Pancreas (tissue), 10 donors: ENCODE measurements at regions of chr7 and their contacts with region 1.

Region 1: GRCh38 chr7:24819916-24820689 is 62.8 kb upstream of the GSDME start:
- DNase-seq: peak; percentile 80 to 90 (median 84)
- ATAC-seq: peak; percentile 94 to 98 (median 97)
- H3K4me3 ChIP-seq: no peak overlapping the region
- H3K27ac ChIP-seq: peak overlapping the region in 2 of 4 donors; percentile 3 to 41
- H3K4me1 ChIP-seq: peaks cover 3 to 13% (median 9%) of the 10 kb centered on the region in 3 donors
- H3K27me3 ChIP-seq: no peaks in the 10 kb centered on the region
- CTCF ChIP-seq: peak; percentile 68 to 84 (median 77)

Region 2: GRCh38 chr7:25069900-25070443 is 249.9 kb after region 1 on chr7:
- intact Hi-C with region 1: loop called in 2 of 3 experiments (anchors 10 kb)
- DNase-seq: peak in 3 of 6 donors; percentile 41 to 55 (median 53)
- ATAC-seq: peak; percentile 82 to 96 (median 92)
- H3K4me3 ChIP-seq: peak overlapping the region in 3 of 4 donors; percentile 12 to 38 (median 30)
- H3K27ac ChIP-seq: no peak overlapping the region
- H3K4me1 ChIP-seq: peaks cover 0 to 11% (median 0%) of the 10 kb centered on the region in 3 donors
- H3K27me3 ChIP-seq: no peaks in the 10 kb centered on the region
- CTCF ChIP-seq: peak; percentile 77 to 89 (median 82)

Region 3: DNA sequence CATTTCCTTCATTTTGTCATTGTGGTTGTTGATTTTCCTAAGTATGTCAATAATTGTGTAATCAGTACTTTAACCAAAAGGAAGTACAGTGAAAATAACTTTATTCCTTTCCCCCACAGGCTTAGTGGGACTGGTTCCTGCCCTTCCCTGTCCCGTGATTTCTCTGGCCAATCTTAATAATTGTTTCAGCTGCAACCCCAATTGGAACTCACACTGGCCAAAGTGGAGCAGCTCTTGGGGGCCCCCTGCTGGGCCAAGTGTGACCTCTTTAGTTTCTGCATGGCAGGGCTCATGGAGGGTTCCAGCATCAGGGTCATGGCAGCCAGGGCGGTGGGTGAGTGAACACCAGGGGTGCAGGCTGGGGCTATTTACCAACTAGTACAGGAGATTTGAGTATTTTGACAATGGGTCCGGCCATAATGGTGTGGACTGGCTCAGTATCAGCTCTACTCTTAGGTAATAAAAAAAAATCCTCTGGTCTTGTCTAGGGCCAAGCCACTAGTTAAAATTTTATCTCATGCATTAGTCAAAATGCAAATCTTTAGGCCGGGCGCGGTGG is 273.2 kb after region 1 on chr7:
- intact Hi-C with region 1: loop called in 1 of 3 experiments (anchors 10 kb)
- DNase-seq: peak; percentile 40 to 79 (median 67)
- ATAC-seq: peak; percentile 82 to 92 (median 90)
- H3K4me3 ChIP-seq: no peak overlapping the region
- H3K27ac ChIP-seq: no peak overlapping the region
- H3K4me1 ChIP-seq: peaks cover 0 to 2% (median 0%) of the 10 kb centered on the region in 3 donors
- H3K27me3 ChIP-seq: no peaks in the 10 kb centered on the region
- CTCF ChIP-seq: peak; percentile 33 to 59 (median 48)

Region 4: GRCh38 chr7:25109276-25109675 is 289.2 kb after region 1 on chr7:
- intact Hi-C with region 1: loop called in 1 of 3 experiments (anchors 10 kb)
- DNase-seq: no peak
- ATAC-seq: no peak
- H3K4me3 ChIP-seq: no peak overlapping the region
- H3K27ac ChIP-seq: no peak overlapping the region
- H3K4me1 ChIP-seq: no peaks in the 10 kb centered on the region
- H3K27me3 ChIP-seq: no peaks in the 10 kb centered on the region
- CTCF ChIP-seq: no peak